Adrenal gland (tissue), 19 donors: ENCODE measurements at regions of chr5 and their contacts with region 1.

Region 1: GRCh38 chr5:64612344-64612961 is 77.8 kb upstream of the SHISAL2B start:
- DNase-seq: peak; percentile 37 to 79 (median 56)
- H3K4me3 ChIP-seq: no peak overlapping the region
- H3K27ac ChIP-seq: no peak overlapping the region
- H3K4me1 ChIP-seq: no peaks in the 10 kb centered on the region
- H3K27me3 ChIP-seq: no peaks in the 10 kb centered on the region
- CTCF ChIP-seq: peak; percentile 58 to 82 (median 78)
- POLR2A ChIP-seq: no peak

Region 2: DNA sequence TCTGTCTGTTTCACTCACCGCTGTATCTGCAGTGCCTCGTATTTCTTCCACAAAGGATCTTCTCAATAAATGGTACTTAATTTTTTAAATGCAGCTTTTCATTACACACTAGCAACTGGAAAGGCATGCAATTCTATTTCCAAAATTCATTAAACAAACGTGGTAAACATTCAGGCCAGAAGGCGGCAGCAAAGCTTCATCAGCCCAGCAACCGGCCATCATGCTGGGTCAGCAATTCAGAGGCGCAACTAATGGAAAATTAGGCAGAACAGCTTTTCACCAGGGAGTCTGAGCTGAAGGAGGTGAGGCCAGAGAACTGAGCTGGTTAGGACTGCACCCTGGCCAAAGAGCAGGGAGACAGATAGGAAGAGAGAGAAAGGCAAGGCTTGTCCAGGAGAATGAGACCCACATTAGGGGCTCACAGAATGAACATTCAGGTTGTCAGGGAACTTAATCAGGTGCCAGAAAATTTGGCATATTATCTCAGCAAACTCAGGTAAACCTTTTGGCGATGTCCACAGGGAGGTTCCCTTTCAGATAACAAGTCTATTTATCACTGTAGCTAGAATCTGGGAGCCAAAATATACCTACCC is 464.5 kb before region 1 on chr5:
- intact Hi-C with region 1: loop called (anchors 5 to 10 kb)
- DNase-seq: peak; percentile 48 to 89 (median 74)
- H3K4me3 ChIP-seq: no peak overlapping the region
- H3K27ac ChIP-seq: no peak overlapping the region
- H3K4me1 ChIP-seq: peaks cover 0 to 10% of the 10 kb centered on the region in 2 donors
- H3K27me3 ChIP-seq: no peaks in the 10 kb centered on the region
- CTCF ChIP-seq: peak; percentile 62 to 93 (median 86)
- POLR2A ChIP-seq: no peak

Region 3: DNA sequence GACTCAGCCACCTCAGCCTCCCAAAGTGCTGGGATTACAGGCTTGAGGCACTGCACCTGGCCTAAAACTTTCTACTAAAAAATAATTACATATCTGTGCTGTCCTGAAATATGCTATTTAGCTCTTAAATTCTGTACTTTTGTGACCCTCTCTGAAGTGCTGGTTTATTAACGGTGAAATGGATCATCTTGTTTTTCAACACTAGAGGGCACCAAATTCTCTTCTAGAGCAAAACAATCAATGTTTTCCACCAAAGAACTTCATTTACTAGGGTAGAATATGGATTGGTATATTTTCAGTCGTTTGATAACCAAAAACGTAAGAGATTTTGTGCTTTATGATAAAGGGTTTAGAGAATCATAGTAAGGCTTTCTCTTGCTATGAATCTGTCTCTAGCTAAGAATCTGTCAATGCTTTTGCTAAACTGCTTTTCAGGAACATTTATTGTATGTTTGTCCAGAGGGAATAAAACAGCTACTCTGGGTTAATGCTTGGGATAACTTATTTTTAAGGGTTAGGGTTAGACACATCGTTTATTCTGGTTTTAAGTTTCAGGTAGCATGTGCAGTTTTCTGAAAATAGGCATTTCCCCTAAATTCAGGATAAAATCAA is 383.2 kb before region 1 on chr5:
- intact Hi-C with region 1: loop called in 1 of 2 experiments (anchors 5 kb)
- DNase-seq: no peak
- H3K4me3 ChIP-seq: no peak overlapping the region
- H3K27ac ChIP-seq: no peak overlapping the region
- H3K4me1 ChIP-seq: peaks cover 0 to 5% of the 10 kb centered on the region in 2 donors
- H3K27me3 ChIP-seq: no peaks in the 10 kb centered on the region
- CTCF ChIP-seq: peak; percentile 55 to 80 (median 72)
- POLR2A ChIP-seq: no peak

Region 4: GRCh38 chr5:64347309-64347708 is 265.1 kb before region 1 on chr5:
- intact Hi-C with region 1: loop called in 1 of 2 experiments (anchors 5 kb)
- DNase-seq: peak in 1 of 7 donors; percentile 20
- H3K4me3 ChIP-seq: no peak overlapping the region
- H3K27ac ChIP-seq: no peak overlapping the region
- H3K4me1 ChIP-seq: peaks cover 10 to 32% of the 10 kb centered on the region in 2 donors
- H3K27me3 ChIP-seq: no peaks in the 10 kb centered on the region
- CTCF ChIP-seq: peak in 3 of 6 experiments; percentile 9 to 30 (median 29)
- POLR2A ChIP-seq: no peak

Region 5: DNA sequence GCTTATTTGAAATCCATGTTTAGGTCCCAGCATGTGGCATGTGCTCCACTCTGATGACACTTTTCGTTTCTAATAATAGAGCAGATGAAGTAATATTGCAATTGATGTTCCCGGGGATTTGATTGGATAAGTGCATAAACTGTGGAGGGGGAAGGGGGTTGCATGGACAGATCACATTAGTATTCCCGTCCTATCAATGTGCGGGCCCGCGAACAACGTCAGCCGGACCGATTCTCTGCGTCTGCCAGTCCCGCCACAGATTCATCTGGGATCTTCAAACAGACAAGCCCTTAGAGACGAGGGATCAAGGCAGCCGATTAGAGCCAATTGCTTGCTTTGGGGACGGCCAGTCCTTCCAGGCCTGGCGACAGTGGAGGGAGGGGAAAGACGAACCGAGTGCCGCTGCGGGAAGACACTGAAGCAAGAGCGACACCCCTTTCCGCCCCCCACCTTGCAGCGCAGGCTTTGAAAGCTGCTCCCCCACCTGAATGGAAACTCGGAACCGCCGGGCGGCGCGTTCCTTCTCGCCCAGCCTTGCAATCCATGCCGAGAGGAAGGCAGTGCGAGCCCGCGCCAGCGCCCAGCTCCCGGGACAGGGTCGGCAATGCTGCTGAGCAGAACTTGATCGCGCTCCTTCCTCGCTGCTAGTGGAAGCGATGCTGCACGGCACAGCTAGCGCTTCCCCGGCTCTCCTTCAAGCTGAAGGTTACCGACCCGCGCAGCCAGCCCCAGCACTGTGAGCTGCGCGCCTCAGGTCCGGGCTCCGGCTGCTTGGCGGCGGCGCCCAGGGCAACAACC is 106.5 kb before region 1 on chr5 and contains the start of gene RGS7BP:
- intact Hi-C with region 1: loop called (anchors 10 kb)
- DNase-seq: peak; percentile 46 to 93 (median 58)
- H3K4me3 ChIP-seq: peak within 1 kb of the TSS in 3 of 4 donors; percentile 35 to 57 (median 46)
- H3K27ac ChIP-seq: peak within 1 kb of the TSS in 2 of 5 donors; percentile 68 to 80
- H3K4me1 ChIP-seq: peaks cover 0 to 7% of the 10 kb centered on the region in 2 donors
- H3K27me3 ChIP-seq: no peaks in the 10 kb centered on the region
- CTCF ChIP-seq: peak in 2 of 6 experiments; percentile 6 to 31
- POLR2A ChIP-seq: peak; percentile 41 to 60
- total RNA-seq, gene RGS7BP: 3.6 to 23.5 (median 11.1) TPM